ENCODE measurements at regions of chr3 and their contacts with region 1.

Region 1: GRCh38 chr3:101635954-101636798 is 40.8 kb downstream of the ZBTB11 start:
- DNase-seq: peak; percentile 37
- H3K4me3 ChIP-seq: no peak overlapping the region
- H3K27ac ChIP-seq: no peak overlapping the region
- H3K4me1 ChIP-seq: no peaks in the 10 kb centered on the region
- H3K27me3 ChIP-seq: no peaks in the 10 kb centered on the region
- CTCF ChIP-seq: peak; percentile 49 to 60

Region 2: DNA sequence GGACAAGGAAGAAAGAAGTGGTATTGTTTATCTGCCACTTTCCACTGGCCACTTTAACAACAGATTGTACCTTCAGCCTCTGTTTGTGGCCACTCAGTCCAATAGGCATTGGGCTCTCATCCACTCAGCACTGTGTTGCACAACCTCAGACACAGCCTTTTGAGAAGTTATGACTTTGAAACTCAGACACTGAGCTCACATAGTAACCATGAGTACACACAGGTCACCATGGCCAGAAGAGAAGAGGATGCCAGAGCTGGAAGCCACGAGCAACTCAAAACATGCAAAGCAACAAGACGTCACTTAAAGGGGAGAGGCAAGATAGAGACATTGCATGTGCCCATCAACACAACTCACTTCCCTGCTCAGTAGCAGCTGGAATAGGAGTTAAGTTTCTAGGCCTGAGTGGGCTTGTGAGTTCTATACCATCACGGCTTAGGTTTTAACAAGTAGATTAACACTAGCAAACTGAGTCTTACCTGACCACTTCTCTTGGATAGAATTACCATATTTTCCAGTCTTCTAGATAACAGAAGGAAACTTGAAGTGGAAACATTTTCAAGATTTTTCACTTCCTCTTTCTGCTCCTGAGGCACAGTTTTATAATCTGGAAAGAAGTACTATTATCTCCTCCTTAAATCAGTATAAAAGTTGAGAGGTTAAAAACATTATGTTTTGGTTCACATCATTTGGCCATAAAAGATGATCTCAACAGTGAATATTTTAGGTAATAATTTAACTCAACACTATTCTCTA is 419.3 kb before region 1 on chr3:
- CTCF ChIA-PET with region 1: no interaction called
- dilution Hi-C with region 1: no loop called
- in situ Hi-C with region 1: no loop called
- intact Hi-C with region 1: loop called (anchors 10 kb)
- DNase-seq: peak; percentile 48
- H3K4me3 ChIP-seq: no peak overlapping the region
- H3K27ac ChIP-seq: no peak overlapping the region
- H3K4me1 ChIP-seq: no peaks in the 10 kb centered on the region
- H3K27me3 ChIP-seq: no peaks in the 10 kb centered on the region
- CTCF ChIP-seq: no peak

Region 3: DNA sequence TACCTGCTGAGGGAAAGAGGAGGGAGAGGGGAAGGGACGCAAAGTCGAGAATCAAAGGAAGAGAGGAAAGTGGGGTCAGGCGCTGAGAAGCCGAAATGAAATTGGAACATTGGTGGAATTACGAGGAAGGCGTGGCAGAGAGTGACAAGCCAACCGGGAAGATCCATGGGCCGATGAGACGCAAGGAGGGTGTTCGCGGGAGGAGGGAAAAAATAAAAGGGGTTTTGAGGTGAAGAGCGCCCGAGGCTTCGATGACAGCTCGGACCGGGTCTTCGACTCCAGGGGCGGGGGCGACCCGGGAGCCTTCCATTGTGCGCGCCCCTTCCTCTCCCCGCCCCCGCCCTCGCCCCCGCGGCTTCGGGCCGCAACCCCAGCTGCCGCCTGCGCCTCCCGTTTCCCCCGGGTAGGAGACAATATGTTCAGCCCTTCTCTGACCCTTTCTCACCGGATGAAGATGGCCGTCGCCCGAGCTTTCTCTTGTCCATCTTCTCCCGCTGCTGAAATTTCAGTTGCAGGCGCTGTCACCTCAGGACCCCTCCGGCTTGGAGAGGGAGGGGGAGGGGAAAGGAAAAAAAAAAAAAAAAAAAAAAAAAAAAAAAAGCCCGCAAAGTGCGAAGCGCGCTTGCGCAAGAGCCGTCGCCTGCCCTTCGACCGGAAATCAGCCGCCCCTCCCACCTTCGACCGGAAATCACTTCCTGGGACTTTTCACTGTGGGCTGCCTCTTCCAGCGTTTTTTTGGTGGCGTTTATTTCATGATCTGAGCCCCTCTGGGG is 123.3 kb before region 1 on chr3 and contains the start of gene SENP7:
- CTCF ChIA-PET with region 1: no interaction called
- dilution Hi-C with region 1: no loop called
- in situ Hi-C with region 1: no loop called
- intact Hi-C with region 1: loop called (anchors 10 kb)
- DNase-seq: peak; percentile 83
- H3K4me3 ChIP-seq: peak within 1 kb of the TSS; percentile 68 to 94 (median 69)
- H3K27ac ChIP-seq: peak within 1 kb of the TSS; percentile 85
- H3K4me1 ChIP-seq: peaks cover 14% of the 10 kb centered on the region
- H3K27me3 ChIP-seq: no peaks in the 10 kb centered on the region
- CTCF ChIP-seq: no peak
- total RNA-seq, gene SENP7: 7.2 to 8.9 TPM

Measured in mammary epithelial cell (primary cell).